ENCODE measurements at regions of chrX and their contacts with region 1.

Region 1: GRCh38 chrX:48696301-48697181 is at the start of gene SUV39H1:
- DNase-seq: peak; percentile 70
- ATAC-seq: peak; percentile 96
- H3K4me3 Mint-ChIP-seq: peak within 1 kb of the TSS; percentile 88
- H3K27ac Mint-ChIP-seq: peak within 1 kb of the TSS; percentile 91
- H3K4me1 Mint-ChIP-seq: peaks cover 19% of the 10 kb centered on the region
- H3K27me3 Mint-ChIP-seq: no peaks in the 10 kb centered on the region
- CTCF ChIP-seq: no peak
- total RNA-seq, gene SUV39H1: 9.1 and 10.8 TPM in 2 replicates

Region 2: DNA sequence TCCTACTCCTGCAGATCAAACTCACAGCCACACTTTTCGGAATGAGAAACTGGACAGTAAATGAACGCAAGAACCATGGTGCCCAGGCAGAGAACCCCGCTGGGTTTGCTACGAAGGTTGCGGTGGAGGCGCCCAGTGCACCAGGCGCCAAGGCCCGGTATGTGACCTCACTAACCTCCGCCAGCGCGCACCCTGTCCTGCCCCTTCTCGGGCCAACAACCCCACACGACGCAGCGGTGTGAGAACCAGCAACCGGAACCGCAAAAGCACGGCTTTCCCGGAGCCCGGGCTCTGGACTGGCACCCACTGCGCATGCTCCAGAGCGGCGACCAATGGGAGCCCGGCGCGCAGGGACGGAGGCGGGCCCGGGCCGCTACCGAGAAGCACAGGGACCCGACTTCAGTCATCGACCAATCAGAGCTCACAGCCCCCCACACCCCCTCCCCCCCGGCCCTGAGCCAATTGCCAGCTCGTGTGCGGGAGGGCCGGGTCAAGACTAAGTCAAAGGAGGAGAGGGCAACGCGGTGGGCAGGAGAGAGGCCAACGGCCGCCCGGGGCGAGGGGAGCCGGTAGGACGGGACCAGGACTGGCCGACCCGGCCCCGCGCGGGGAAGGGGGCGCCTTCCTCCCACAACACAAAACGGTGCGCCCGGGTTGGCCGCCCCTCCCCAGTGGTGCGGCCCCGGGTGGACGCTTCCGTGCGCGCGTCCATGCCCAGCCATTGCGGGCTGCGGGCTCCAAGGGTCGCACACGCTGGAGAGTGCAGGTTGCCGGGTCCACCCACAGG is 20.2 kb before region 1 on chrX:
- CTCF ChIA-PET with region 1: no interaction called
- POLR2A ChIA-PET with region 1: interaction called, 10 read pairs
- intact Hi-C with region 1: loop called (anchors 2 kb)
- DNase-seq: peak; percentile 79
- ATAC-seq: peak; percentile 94
- H3K4me3 Mint-ChIP-seq: peak overlapping the region; percentile 89
- H3K27ac Mint-ChIP-seq: peak overlapping the region; percentile 88
- H3K4me1 Mint-ChIP-seq: peaks cover 22% of the 10 kb centered on the region
- H3K27me3 Mint-ChIP-seq: no peaks in the 10 kb centered on the region
- CTCF ChIP-seq: no peak

Region 3: GRCh38 chrX:48683411-48683982 is 13.0 kb before region 1 on chrX and contains the start of gene WAS:
- CTCF ChIA-PET with region 1: interaction called, 3 read pairs
- POLR2A ChIA-PET with region 1: interaction called, 20 read pairs
- intact Hi-C with region 1: loop called (anchors 1 kb)
- DNase-seq: peak; percentile 20
- ATAC-seq: peak; percentile 87
- H3K4me3 Mint-ChIP-seq: peak within 1 kb of the TSS; percentile 93
- H3K27ac Mint-ChIP-seq: peak within 1 kb of the TSS; percentile 94
- H3K4me1 Mint-ChIP-seq: peaks cover 58% of the 10 kb centered on the region
- H3K27me3 Mint-ChIP-seq: no peaks in the 10 kb centered on the region
- CTCF ChIP-seq: no peak
- total RNA-seq, gene WAS: 101 and 102 TPM in 2 replicates

Region 4: DNA sequence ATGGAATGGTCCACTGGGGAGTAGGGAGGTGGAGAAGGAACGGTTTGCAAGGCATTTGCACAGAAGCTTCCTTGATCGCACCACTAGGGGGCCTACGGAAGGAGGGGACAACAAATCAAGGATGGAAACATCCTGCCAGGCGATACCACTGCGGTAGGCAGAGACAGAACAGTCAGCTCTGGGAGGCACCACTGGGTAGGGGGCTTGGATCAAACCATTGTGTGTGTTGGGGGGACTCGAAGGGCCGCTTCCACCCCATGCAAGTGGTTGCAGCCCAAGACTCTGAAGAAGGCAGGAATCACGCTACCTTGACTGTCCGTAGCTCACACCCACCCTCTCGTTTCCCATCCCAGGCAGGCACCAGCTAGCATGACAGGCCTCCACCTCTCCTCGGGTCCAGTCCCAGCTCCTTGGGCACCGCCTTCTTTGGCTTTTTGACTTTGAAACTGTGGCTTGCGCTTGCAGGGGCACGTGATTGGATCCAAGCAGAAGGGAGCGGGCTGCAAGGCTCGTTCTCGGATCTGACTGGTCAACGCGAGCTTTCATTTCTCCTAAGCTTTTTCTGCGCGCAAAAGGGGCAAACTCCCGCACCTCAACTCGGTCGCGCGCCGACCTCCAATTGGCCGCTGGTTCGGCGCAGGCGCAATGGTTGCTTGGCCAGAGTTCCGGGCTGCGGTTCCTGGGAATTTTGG is 930.7 kb after region 1 on chrX:
- CTCF ChIA-PET with region 1: no interaction called
- POLR2A ChIA-PET with region 1: no interaction called
- intact Hi-C with region 1: no loop called
- DNase-seq: no peak
- ATAC-seq: no peak
- H3K4me3 Mint-ChIP-seq: peak overlapping the region; percentile 24
- H3K27ac Mint-ChIP-seq: no peak overlapping the region
- H3K4me1 Mint-ChIP-seq: no peaks in the 10 kb centered on the region
- H3K27me3 Mint-ChIP-seq: no peaks in the 10 kb centered on the region
- CTCF ChIP-seq: no peak

Region 5: DNA sequence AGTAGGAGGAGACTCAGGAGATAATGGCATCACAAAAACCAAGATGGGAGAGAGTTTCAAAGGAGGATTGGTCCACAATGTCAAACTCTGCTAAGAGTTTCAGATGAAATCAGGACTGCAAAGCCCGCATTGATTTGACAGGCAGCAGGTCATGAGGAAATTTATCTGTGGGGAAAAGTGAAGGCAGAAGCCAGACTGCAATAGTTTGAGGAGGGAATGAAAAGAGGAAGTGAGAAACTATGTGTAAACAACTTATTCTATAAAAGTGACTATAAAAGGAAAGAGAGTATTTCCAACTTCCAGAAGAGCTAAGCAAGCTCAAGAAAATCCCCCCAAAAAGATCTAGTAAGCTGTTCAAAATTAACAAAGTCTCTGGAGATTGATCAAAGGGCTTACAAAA is 1840.4 kb after region 1 on chrX:
- CTCF ChIA-PET with region 1: no interaction called
- POLR2A ChIA-PET with region 1: no interaction called
- intact Hi-C with region 1: no loop called
- DNase-seq: no peak
- ATAC-seq: no peak
- H3K4me3 Mint-ChIP-seq: peak overlapping the region; percentile 32
- H3K27ac Mint-ChIP-seq: no peak overlapping the region
- H3K4me1 Mint-ChIP-seq: peaks cover 11% of the 10 kb centered on the region
- H3K27me3 Mint-ChIP-seq: no peaks in the 10 kb centered on the region
- CTCF ChIP-seq: no peak